Cardiac septum (tissue), 1 donor: ENCODE measurements at regions of chr12 and their contacts with region 1.

Region 1: GRCh38 chr12:53220801-53221202 is 11.2 kb downstream of the RARG start:
- DNase-seq: peak; percentile 95

Region 2: DNA sequence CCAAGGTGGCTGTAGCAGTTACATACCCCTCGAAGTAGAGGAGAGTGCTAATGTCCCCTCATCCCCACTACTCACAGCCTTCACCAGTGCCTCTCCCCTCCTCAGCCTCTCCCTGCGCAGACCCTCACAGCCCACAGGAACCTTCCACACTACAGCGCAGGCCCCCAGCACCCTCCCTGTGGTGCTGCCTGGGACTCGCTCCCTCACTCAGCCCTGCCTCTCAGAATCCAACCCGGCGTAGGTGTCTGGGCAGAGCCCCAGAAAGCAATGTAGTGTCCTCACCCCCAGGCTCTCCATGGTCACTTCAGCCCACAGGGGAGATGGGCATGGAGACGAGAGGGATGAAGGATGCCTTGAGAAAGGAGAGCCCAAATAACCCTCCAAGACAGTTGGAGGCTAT is 51.2 kb before region 1 on chr12:
- intact Hi-C with region 1: no loop called
- DNase-seq: no peak

Region 3: DNA sequence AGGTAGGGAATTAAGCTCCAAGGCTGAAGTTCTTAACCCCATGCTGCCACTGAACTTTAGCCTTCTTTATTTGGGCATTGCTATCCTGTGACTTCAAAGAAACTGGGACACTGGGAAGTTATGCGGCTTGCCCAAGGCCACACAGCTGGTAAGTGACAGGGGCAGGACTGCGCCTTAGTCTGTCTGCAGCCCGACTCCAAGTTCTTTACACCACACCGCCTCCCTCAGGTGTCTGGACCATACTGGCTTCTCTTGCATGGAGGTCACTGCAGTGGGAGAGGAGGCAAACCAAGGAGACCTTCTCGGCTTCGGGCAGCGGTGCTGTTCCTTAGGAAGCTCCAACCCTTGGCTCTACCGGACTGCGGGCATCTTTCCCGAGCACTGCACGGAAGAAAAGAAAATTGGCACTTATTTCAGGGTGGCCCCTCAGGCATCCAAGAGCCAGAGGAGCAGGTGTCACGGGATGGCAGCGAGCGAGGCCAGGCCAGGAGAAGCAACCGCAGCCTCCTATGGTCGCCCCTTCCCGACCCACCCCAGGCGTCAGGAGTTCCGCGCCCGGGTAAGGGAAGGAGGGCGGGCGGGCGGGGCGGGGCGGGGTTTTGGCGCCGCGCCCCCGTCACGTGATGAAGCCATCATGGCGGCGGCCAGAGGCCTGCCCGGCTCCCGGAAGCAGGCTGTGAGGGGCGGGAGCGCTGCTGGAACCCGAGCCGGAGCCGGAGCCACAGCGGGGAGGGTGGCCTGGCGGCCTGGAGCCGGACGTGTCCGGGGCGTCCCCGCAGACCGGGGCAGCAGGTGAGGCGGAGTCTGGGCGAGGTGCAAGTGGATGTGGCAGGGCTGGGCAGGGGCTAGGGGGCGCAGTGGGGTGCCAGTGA is 30.9 kb after region 1 on chr12:
- intact Hi-C with region 1: loop called (anchors 2 kb)
- DNase-seq: peak; percentile 91